Right cardiac atrium (tissue), 5 donors: ENCODE measurements at regions of chr11 and their contacts with region 1.

Region 1: GRCh38 chr11:62497132-62497915 is 49.3 kb downstream of the AHNAK start:
- DNase-seq: no peak
- ATAC-seq: peak; percentile 44 to 51
- H3K4me3 ChIP-seq: no peak overlapping the region
- H3K27ac ChIP-seq: no peak overlapping the region
- H3K4me1 ChIP-seq: peaks cover 9% of the 10 kb centered on the region
- H3K27me3 ChIP-seq: no peaks in the 10 kb centered on the region

Region 2: DNA sequence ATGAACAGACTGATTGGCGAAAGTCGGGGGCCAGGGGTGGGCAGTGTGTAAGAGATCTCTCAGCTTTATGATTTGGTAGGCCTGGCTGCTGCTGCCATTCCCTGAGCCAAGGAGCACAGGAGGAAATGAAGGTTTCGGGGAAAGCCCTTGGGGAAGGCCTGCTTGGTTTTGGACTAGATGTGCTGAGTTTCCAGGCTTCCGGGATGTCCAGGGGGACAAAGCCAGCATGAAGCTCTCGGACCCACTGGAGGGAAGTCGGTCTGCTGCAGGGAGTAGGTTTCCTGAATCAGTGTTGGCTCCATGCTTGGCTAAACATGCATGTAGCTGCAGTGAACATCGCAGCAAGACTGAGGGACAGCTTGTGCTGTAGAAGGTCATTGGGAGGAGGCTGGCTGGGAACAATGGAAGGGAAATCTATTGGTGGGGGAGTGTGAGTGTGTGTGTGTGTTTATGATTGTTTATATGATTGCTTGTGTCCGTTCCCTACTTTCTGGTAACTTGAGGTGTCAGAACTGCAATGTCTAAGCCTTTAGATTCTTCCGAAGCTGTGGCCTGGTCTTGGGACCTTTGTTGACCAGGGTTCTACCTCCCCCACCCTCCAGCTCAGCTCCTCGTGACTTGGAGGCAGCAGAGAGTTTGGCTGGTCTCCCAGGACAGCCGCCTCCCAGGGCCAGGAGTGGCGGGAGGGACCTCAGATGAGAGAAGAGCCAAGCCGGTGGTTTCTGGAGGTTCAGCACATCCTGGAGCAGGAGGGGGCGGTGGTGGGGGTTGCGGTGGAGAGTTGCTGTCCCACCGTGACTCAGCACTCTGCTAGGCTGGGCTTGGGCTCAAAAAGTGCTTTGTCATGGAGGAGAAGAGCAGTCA is 525.8 kb before region 1 on chr11:
- intact Hi-C with region 1: no loop called
- DNase-seq: peak; percentile 97 to 99 (median 99)
- ATAC-seq: peak; percentile 73 to 77
- H3K4me3 ChIP-seq: no peak overlapping the region
- H3K27ac ChIP-seq: peak overlapping the region; percentile 99
- H3K4me1 ChIP-seq: peaks cover 31% of the 10 kb centered on the region
- H3K27me3 ChIP-seq: no peaks in the 10 kb centered on the region

Region 3: DNA sequence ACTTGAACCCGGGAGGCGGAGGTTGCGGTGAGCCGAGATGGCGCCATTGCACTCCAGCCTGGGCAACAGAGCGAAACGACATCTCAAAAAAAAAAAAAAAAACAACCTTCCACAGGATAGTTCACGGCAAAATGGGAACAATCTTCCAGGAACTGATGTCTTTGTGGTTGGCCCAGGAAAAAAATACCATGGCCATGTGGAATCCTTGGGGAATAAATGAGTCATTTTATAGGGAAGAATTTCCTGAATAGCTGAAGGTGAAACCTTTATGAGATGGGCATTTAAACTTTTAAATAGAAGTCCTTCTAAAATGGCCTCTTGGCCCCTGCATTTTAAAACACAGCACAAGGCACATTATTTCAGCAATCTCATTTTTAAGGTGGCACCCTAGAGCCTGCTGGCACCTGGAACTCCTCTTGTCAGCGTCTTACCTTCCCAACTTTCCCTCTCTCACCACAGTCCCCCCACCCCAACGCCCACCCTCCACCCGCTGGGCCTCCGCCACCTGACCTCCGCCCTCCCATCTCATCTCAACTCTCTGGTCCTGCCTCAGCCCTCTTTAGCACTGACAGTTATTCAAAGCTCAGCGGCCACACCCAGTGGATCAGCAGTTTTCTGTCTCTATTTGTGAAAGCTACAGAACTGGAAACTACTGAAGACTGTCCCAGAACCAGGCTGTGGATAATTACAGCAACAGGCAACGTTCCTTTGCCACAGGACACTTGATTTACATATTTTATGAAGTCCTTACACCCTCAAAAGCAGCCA is 35.4 kb before region 1 on chr11:
- intact Hi-C with region 1: no loop called
- DNase-seq: no peak
- ATAC-seq: peak in 1 of 2 donors; percentile 24
- H3K4me3 ChIP-seq: no peak overlapping the region
- H3K27ac ChIP-seq: no peak overlapping the region
- H3K4me1 ChIP-seq: no peaks in the 10 kb centered on the region
- H3K27me3 ChIP-seq: no peaks in the 10 kb centered on the region

Region 4: GRCh38 chr11:62556108-62556871 is 59.0 kb after region 1 on chr11:
- intact Hi-C with region 1: loop called in 1 of 4 experiments (anchors 10 kb)
- DNase-seq: peak; percentile 93 to 95 (median 95)
- ATAC-seq: peak; percentile 77 to 82
- H3K4me3 ChIP-seq: no peak overlapping the region
- H3K27ac ChIP-seq: peak overlapping the region; percentile 83
- H3K4me1 ChIP-seq: peaks cover 48% of the 10 kb centered on the region
- H3K27me3 ChIP-seq: no peaks in the 10 kb centered on the region

Region 5: GRCh38 chr11:62612366-62613290 is 115.3 kb after region 1 on chr11 and contains the starts of genes EML3 and ROM1:
- intact Hi-C with region 1: no loop called
- DNase-seq: peak; percentile 96 to 98 (median 97)
- ATAC-seq: peak; percentile 90 to 91
- H3K4me3 ChIP-seq: peak within 1 kb of the TSS; percentile 87
- H3K27ac ChIP-seq: peak within 1 kb of the TSS; percentile 90
- H3K4me1 ChIP-seq: no peaks in the 10 kb centered on the region
- H3K27me3 ChIP-seq: no peaks in the 10 kb centered on the region
- total RNA-seq, gene EML3: 23.5 to 33.3 (median 26.7) TPM
- total RNA-seq, gene ROM1: 6.1 to 7.9 (median 6.6) TPM